Adrenal gland (tissue), 19 donors: ENCODE measurements at regions of chr10 and their contacts with region 1.

Region 1: DNA sequence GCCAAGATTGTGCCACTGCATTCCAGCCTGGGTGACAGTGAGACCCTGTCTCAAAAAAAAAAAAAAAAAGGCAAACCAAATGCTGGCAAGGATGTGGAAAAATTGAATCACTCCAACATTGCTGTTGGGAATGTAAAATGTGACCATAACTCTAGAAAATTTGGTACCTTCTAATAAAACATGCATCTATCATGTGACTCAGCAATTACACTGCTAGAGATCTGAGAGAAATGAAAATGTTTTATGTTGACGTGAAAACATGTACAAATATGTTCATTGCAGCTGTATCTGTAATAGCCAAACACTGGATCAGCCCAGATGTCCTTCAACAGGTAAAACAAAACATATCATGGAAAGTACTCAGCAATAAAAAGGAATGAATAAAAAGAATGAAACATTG is 30.8 kb upstream of the SAR1A start:
- DNase-seq: no peak
- H3K4me3 ChIP-seq: no peak overlapping the region
- H3K27ac ChIP-seq: no peak overlapping the region
- H3K4me1 ChIP-seq: no peaks in the 10 kb centered on the region
- H3K27me3 ChIP-seq: no peaks in the 10 kb centered on the region
- CTCF ChIP-seq: no peak
- POLR2A ChIP-seq: no peak

Region 2: DNA sequence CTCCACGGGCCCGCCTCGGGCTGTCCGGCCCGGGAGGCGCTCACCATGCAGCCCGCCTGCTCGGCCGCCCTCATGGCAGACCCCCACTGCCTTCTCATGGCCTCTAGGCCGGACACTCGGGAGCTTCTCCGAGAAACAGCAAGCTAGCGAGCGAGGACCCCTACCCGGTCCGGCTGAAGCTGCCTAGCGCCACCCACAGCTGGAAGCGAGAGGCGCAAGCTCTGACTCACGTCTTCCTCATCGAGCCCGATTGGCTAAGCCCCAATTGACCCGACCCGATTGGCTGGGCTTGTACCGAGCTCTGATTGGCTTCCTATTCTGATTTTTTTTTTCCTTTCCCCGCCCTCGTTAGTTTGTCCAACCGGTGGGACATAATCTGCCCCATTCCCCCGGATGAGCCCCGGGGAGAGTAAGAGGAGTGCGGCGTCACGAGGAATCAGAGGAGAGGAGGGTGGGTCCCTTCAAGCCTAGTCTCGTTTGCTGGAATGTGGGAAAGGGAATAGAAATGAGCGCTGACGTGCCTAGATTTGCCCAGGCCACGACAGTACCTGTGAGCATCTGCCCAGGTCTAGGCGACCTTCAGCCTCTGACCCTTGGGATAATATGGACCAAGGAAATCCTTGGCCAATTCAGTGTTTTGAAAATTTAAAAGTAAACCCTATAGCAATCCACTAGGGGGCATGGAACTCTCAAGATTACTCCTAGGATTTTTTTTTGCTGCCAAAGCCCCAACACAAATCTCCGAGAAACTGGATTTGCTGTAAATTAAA is 54.4 kb before region 1 on chr10 and contains the start of gene TYSND1:
- intact Hi-C with region 1: loop called in 1 of 2 experiments (anchors 5 kb)
- DNase-seq: peak; percentile 97 to 99 (median 99)
- H3K4me3 ChIP-seq: peak within 1 kb of the TSS in 3 of 4 donors; percentile 36 to 74 (median 56)
- H3K27ac ChIP-seq: peak within 1 kb of the TSS; percentile 81 to 96 (median 86)
- H3K4me1 ChIP-seq: peaks cover 17 to 23% of the 10 kb centered on the region in 2 donors
- H3K27me3 ChIP-seq: no peaks in the 10 kb centered on the region
- CTCF ChIP-seq: peak; percentile 47 to 79 (median 69)
- POLR2A ChIP-seq: peak; percentile 43 to 90
- total RNA-seq, gene TYSND1: 4.1 to 33.1 (median 17.9) TPM